A673 (cell line): ENCODE measurements at regions of chr15 and their contacts with region 1.

Region 1: DNA sequence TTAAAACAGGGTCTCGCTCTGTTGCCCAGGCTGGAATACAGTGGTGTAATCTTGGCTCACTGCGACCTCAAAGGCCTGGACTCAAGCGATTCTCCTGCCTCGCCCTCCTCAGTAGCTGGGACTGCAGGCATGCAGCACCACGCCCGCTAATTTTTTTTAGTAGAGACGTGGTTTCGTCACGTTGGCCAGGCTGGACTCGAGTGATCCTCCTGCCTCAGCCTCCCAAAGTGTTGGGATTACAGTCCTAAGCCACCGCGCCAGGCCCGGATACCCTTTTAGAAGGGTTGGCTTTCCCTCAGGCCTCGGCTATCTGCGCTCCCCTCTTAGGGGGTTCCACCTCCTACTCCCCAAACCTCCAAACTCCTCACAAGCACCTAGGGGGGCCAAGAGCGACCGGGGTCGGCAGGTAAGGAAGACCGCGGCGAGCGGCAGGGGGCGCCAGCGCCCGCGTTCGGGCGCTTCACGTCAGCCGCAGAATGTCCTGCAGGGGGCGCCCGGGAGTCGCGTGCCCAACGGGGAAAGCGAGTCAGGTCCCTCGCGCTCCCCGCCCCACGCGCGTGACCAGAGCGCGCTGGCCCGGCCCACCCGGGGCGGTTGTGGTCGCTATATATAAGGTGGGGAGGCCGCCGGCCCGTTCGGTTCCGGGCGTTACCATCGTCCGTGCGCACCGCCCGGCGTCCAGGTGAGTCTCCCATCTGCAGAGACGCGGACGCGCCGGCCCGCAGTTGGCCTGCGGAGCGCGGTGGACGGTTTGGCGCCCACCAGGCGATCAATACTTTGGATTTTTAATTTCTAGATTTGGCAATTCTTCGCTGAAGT is 51.8 kb upstream of the GATM start:
- DNase-seq: peak; percentile 59
- H3K4me3 ChIP-seq: no peak overlapping the region
- H3K27ac ChIP-seq: no peak overlapping the region
- H3K4me1 ChIP-seq: no peaks in the 10 kb centered on the region
- H3K27me3 ChIP-seq: no peaks in the 10 kb centered on the region
- CTCF ChIP-seq: peak; percentile 100

Region 2: GRCh38 chr15:45648521-45649200 is 218.5 kb after region 1 on chr15:
- CTCF ChIA-PET with region 1: interaction called, 13 read pairs
- POLR2A ChIA-PET with region 1: no interaction called
- intact Hi-C with region 1: no loop called
- DNase-seq: no peak
- H3K4me3 ChIP-seq: no peak overlapping the region
- H3K27ac ChIP-seq: no peak overlapping the region
- H3K4me1 ChIP-seq: no peaks in the 10 kb centered on the region
- H3K27me3 ChIP-seq: no peaks in the 10 kb centered on the region
- CTCF ChIP-seq: no peak

Region 3: GRCh38 chr15:45705510-45706473 is 275.6 kb after region 1 on chr15:
- CTCF ChIA-PET with region 1: no interaction called
- POLR2A ChIA-PET with region 1: no interaction called
- intact Hi-C with region 1: no loop called
- DNase-seq: peak; percentile 91
- H3K4me3 ChIP-seq: peak overlapping the region; percentile 48
- H3K27ac ChIP-seq: no peak overlapping the region
- H3K4me1 ChIP-seq: no peaks in the 10 kb centered on the region
- H3K27me3 ChIP-seq: no peaks in the 10 kb centered on the region
- CTCF ChIP-seq: peak; percentile 87